ENCODE measurements at regions of chr5 and their contacts with region 1.

Region 1: DNA sequence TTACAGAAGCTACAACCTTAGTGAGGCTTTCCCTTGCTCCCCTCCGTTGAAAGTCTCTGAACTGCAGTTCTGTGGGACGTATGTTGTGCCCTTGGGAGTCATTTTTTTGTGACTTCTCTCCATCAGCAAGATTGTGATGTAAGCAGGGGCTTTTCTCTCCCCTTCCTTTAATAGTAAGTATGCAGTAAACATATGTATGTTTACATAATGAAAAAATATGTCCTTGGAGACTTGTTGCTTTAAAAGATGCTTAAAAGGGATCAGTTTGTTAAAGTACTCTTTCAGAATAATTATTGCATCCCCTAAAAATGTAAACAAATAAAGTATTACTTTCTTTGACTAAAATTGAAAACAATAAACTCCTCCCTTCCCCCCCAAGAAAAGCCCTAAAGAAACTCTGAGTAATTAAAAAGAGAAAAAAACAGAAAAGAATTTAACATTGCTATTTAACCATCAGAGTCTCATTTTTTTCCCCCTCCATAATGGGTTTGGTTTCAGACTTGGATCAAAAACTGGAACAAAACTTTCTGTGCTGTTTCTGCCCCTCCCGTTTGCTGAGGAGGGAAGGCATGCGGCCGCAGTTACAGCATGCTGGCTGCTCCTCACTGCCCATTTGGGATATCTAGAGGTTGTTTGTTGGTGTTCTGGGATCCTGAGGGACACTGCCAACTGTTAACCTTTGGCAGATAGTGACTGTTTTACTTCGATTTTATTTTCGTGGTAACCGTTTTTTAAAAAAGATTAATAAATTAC is 40.2 kb downstream of the TRIO start:
- DNase-seq: no peak
- H3K4me3 ChIP-seq: no peak overlapping the region
- H3K27ac ChIP-seq: peak overlapping the region; percentile 59
- H3K4me1 ChIP-seq: peaks cover 84% of the 10 kb centered on the region
- H3K27me3 ChIP-seq: no peaks in the 10 kb centered on the region
- CTCF ChIP-seq: no peak

Region 2: DNA sequence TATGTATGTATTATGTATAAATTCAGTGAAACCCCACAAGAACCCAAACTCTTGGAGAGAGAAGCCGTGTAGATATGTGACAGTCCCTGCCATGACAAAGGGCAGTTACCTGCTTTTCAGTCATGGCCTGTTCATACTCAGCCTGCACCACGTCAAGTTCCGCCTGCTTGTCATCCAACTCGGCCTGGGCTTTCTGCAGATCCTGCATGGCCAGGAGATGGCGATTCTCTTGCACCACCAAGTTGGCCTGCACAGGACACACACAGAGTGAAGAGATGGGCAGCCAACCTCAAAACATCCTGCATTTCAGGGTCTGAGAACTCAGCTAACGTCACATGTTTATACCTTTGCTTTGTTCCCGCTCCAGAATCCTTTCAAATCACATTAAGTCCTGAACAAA is 424.6 kb before region 1 on chr5:
- CTCF ChIA-PET with region 1: no interaction called
- dilution Hi-C with region 1: no loop called
- in situ Hi-C with region 1: no loop called
- intact Hi-C with region 1: no loop called
- DNase-seq: no peak
- H3K4me3 ChIP-seq: no peak overlapping the region
- H3K27ac ChIP-seq: no peak overlapping the region
- H3K4me1 ChIP-seq: no peaks in the 10 kb centered on the region
- H3K27me3 ChIP-seq: no peaks in the 10 kb centered on the region
- CTCF ChIP-seq: no peak

Region 3: DNA sequence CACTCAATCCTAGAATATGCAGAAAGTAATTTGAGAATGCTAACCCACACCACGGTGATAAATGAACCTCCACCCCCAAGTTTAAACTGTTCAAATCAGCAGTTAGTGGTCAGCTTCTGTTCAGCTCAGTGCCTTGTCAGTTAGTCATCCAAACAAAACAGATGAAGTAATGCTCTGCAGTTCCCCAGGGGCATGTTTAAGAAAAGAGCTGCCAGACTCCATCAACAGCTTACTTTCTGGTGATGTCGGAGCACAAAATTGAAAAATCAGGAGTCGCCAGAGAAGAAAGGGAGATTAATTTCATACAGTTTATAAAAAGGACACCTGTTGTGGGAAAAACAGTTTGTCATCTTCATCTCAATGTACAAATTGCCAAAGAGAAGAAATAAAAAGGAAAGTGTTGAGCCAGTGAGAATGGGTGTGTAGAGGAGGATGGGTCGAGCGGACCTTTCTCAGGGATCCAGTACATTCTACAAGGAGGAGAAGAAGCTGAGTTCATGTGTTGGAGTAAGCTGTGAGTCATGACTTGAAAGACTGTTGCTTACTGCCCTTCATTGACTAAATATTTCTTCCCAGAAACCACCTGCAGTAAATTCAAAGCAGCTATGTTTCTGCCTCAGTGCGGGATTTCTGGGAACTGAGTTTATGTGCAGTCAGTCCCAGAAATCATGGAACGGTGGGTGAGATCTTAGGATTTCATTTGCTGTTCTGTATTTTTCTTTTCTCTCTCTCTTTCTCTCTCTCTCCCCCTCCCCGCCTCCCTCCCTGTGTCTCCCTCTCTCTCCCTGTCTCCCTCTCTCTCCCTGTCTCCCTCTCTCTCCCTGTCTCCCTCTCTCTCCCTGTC is 26.5 kb before region 1 on chr5:
- CTCF ChIA-PET with region 1: no interaction called
- dilution Hi-C with region 1: no loop called
- in situ Hi-C with region 1: no loop called
- intact Hi-C with region 1: loop called (anchors 1 kb)
- DNase-seq: peak; percentile 94
- H3K4me3 ChIP-seq: peak overlapping the region in 2 of 3 experiments; percentile 16 to 33
- H3K27ac ChIP-seq: peak overlapping the region; percentile 85
- H3K4me1 ChIP-seq: peaks cover 47% of the 10 kb centered on the region
- H3K27me3 ChIP-seq: no peaks in the 10 kb centered on the region
- CTCF ChIP-seq: no peak

Region 4: DNA sequence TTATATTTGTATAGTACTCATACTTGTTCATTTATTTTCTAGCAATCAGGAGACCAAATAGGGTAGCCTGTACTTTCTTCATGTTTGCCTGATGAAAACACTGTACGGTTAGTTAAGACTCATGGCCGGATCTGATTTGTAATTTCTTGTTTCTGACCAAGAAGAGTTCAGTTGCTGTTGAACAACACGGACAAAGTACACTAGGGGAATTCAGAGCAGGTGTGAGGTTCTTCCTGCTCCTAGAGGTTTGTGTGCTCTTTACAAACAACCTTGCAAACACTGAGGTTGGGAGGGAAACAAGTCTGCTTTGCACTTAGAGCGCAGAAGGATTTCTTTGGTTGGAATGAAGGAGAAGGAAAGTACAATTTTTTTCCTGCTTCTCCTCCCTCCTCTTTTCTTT is 29.5 kb after region 1 on chr5:
- CTCF ChIA-PET with region 1: no interaction called
- dilution Hi-C with region 1: no loop called
- in situ Hi-C with region 1: no loop called
- intact Hi-C with region 1: no loop called
- DNase-seq: no peak
- H3K4me3 ChIP-seq: no peak overlapping the region
- H3K27ac ChIP-seq: peak overlapping the region; percentile 46
- H3K4me1 ChIP-seq: peaks cover 61% of the 10 kb centered on the region
- H3K27me3 ChIP-seq: no peaks in the 10 kb centered on the region
- CTCF ChIP-seq: no peak